Activated CD4-positive, alpha-beta memory T cell treated with anti-CD3 and anti-CD28 coated beads for 36 hours (primary cell): ENCODE measurements at regions of chr6 and their contacts with region 1.

Region 1: GRCh38 chr6:131419702-131420101 is 153.3 kb upstream of the ARG1 start:
- DNase-seq: no peak
- H3K4me3 Mint-ChIP-seq: no peak overlapping the region
- H3K27ac Mint-ChIP-seq: no peak overlapping the region
- H3K4me1 Mint-ChIP-seq: peaks cover 24% of the 10 kb centered on the region
- H3K27me3 Mint-ChIP-seq: no peaks in the 10 kb centered on the region

Region 2: GRCh38 chr6:131408811-131409210 is 10.9 kb before region 1 on chr6:
- CTCF ChIA-PET with region 1: no interaction called
- POLR2A ChIA-PET with region 1: no interaction called
- intact Hi-C with region 1: no loop called
- DNase-seq: no peak
- H3K4me3 Mint-ChIP-seq: no peak overlapping the region
- H3K27ac Mint-ChIP-seq: no peak overlapping the region
- H3K4me1 Mint-ChIP-seq: peaks cover 4% of the 10 kb centered on the region
- H3K27me3 Mint-ChIP-seq: no peaks in the 10 kb centered on the region

Region 3: GRCh38 chr6:131431718-131432117 is 12.0 kb after region 1 on chr6:
- CTCF ChIA-PET with region 1: interaction called, 3 read pairs
- POLR2A ChIA-PET with region 1: no interaction called
- intact Hi-C with region 1: loop called (anchors 2 kb)
- DNase-seq: no peak
- H3K4me3 Mint-ChIP-seq: no peak overlapping the region
- H3K27ac Mint-ChIP-seq: no peak overlapping the region
- H3K4me1 Mint-ChIP-seq: peaks cover 13% of the 10 kb centered on the region
- H3K27me3 Mint-ChIP-seq: no peaks in the 10 kb centered on the region

Region 4: GRCh38 chr6:131451321-131452144 is 31.8 kb after region 1 on chr6:
- CTCF ChIA-PET with region 1: no interaction called
- POLR2A ChIA-PET with region 1: no interaction called
- intact Hi-C with region 1: loop called (anchors 5 kb)
- DNase-seq: peak; percentile 12
- H3K4me3 Mint-ChIP-seq: no peak overlapping the region
- H3K27ac Mint-ChIP-seq: peak overlapping the region; percentile 71
- H3K4me1 Mint-ChIP-seq: peaks cover 26% of the 10 kb centered on the region
- H3K27me3 Mint-ChIP-seq: no peaks in the 10 kb centered on the region

Region 5: GRCh38 chr6:131510094-131510493 is 90.4 kb after region 1 on chr6:
- CTCF ChIA-PET with region 1: no interaction called
- POLR2A ChIA-PET with region 1: no interaction called
- intact Hi-C with region 1: no loop called
- DNase-seq: no peak
- H3K4me3 Mint-ChIP-seq: no peak overlapping the region
- H3K27ac Mint-ChIP-seq: no peak overlapping the region
- H3K4me1 Mint-ChIP-seq: no peaks in the 10 kb centered on the region
- H3K27me3 Mint-ChIP-seq: no peaks in the 10 kb centered on the region